Left ventricle myocardium inferior (tissue), 1 donor: ENCODE measurements at regions of chr5 and their contacts with region 1.

Region 1: GRCh38 chr5:136212252-136212721 is 19.3 kb upstream of the SMIM32 start:
- DNase-seq: peak; percentile 49
- H3K4me3 ChIP-seq: no peak overlapping the region
- H3K27ac ChIP-seq: no peak overlapping the region
- H3K4me1 ChIP-seq: no peaks in the 10 kb centered on the region
- H3K27me3 ChIP-seq: peaks cover 84% of the 10 kb centered on the region
- CTCF ChIP-seq: peak; percentile 92

Region 2: GRCh38 chr5:135887351-135887864 is 324.9 kb before region 1 on chr5:
- intact Hi-C with region 1: loop called (anchors 5 kb)
- DNase-seq: no peak
- H3K4me3 ChIP-seq: no peak overlapping the region
- H3K27ac ChIP-seq: no peak overlapping the region
- H3K4me1 ChIP-seq: peaks cover 19% of the 10 kb centered on the region
- H3K27me3 ChIP-seq: peaks cover 46% of the 10 kb centered on the region
- CTCF ChIP-seq: peak; percentile 92

Region 3: DNA sequence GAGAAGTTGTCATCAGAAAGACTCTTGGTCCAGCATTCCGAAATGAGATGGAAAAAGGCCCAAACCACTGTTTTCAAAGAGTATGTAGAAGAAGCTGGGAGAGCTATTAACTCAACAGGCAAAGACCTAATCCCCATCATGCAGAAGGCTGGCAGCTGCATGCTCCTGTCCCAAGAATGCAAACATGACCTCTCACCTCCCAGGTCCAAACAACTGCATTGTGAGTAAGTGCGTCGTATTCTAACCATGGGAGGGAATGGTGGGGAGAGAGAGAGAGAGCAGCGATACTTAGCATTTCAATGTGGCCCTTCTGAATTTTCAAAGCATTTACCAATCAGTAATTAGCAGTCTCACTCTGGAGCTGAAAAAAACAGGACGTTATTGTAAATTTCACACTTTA is 125.5 kb after region 1 on chr5:
- intact Hi-C with region 1: no loop called
- DNase-seq: no peak
- H3K4me3 ChIP-seq: no peak overlapping the region
- H3K27ac ChIP-seq: no peak overlapping the region
- H3K4me1 ChIP-seq: no peaks in the 10 kb centered on the region
- H3K27me3 ChIP-seq: peaks cover 54% of the 10 kb centered on the region
- CTCF ChIP-seq: no peak